ENCODE measurements at regions of chr3 and their contacts with region 1.

Region 1: GRCh38 chr3:101573449-101574387 is at the start of gene PCNP:
- DNase-seq: peak; percentile 99
- H3K4me3 ChIP-seq: peak within 1 kb of the TSS; percentile 70 to 97 (median 94)
- H3K27ac ChIP-seq: peak within 1 kb of the TSS; percentile 94 to 99 (median 98)
- H3K4me1 ChIP-seq: peaks cover 0 to 49% (median 36%) of the 10 kb centered on the region in 4 donors
- H3K27me3 ChIP-seq: no peaks in the 10 kb centered on the region
- CTCF ChIP-seq: peak; percentile 85 to 97 (median 91)
- EP300 ChIP-seq: peak in 1 of 4 donors; percentile 71
- POLR2A ChIP-seq: peak; percentile 81 to 84
- total RNA-seq, gene PCNP: 146 to 178 (median 163) TPM

Region 2: GRCh38 chr3:101478980-101479379 is 94.7 kb before region 1 on chr3:
- intact Hi-C with region 1: no loop called
- DNase-seq: no peak
- H3K4me3 ChIP-seq: no peak overlapping the region
- H3K27ac ChIP-seq: no peak overlapping the region
- H3K4me1 ChIP-seq: no peaks in the 10 kb centered on the region
- H3K27me3 ChIP-seq: no peaks in the 10 kb centered on the region
- CTCF ChIP-seq: no peak
- EP300 ChIP-seq: no peak
- POLR2A ChIP-seq: no peak

Region 3: GRCh38 chr3:101512646-101513418 is 60.9 kb before region 1 on chr3 and contains the start of gene SENP7:
- intact Hi-C with region 1: loop called (anchors 1 kb)
- DNase-seq: peak; percentile 92
- H3K4me3 ChIP-seq: peak within 1 kb of the TSS; percentile 76 to 88 (median 82)
- H3K27ac ChIP-seq: peak within 1 kb of the TSS; percentile 94 to 96 (median 95)
- H3K4me1 ChIP-seq: peaks cover 0 to 22% (median 14%) of the 10 kb centered on the region in 4 donors
- H3K27me3 ChIP-seq: peaks cover 0 to under 1% (median 0%) of the 10 kb centered on the region in 3 donors
- CTCF ChIP-seq: no peak
- EP300 ChIP-seq: peak in 1 of 4 donors; percentile 11
- POLR2A ChIP-seq: peak in 1 of 2 donors; percentile 13
- total RNA-seq, gene SENP7: 20.2 to 33.5 (median 30.4) TPM

Region 4: DNA sequence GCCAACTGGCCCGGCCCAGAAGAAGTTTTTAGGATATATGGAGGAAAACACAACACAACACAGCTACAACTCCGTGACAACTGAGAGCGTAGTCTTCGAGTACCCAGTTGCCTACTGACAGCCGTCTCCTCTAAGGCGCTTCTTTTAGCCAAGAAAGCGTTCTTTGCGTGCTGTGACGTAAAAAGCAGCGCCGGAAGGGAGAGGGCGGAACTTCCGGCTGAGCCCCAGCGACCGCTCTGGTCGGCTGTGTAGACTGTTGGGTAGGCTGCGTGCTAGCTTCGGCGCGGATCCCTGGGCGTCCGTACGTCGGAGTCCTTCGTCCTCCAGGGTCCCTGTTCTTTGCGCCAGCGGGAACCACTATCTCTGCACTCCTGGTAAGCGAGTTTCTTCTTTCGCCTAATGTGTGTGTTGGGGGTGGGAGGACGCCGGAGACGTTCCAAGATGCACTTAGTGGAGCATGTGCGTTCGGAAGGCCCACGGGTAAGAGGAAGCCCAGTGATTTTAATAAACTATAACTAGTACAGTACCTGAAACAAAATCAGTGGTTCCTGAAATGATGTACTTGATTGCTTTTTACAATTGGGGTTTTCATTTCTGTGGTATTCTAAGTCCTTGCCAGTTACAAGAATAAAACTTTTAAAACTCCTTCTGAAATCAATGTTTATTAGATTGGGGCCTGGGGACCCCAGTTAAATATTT is 11.9 kb before region 1 on chr3 and contains the start of gene TRMT10C:
- intact Hi-C with region 1: loop called (anchors 1 kb)
- DNase-seq: peak; percentile 95
- H3K4me3 ChIP-seq: peak within 1 kb of the TSS; percentile 47 to 74 (median 70)
- H3K27ac ChIP-seq: peak within 1 kb of the TSS; percentile 85 to 90 (median 87)
- H3K4me1 ChIP-seq: peaks cover 0 to 27% (median 16%) of the 10 kb centered on the region in 4 donors
- H3K27me3 ChIP-seq: peaks cover 0 to 27% (median 0%) of the 10 kb centered on the region in 3 donors
- CTCF ChIP-seq: no peak
- EP300 ChIP-seq: no peak
- POLR2A ChIP-seq: peak; percentile 77 to 84
- total RNA-seq, gene TRMT10C: 15.5 to 29.1 (median 19.2) TPM

Region 5: GRCh38 chr3:101676765-101677435 is 103.2 kb after region 1 on chr3 and contains the start of gene ZBTB11:
- intact Hi-C with region 1: loop called (anchors 5 kb)
- DNase-seq: peak; percentile 100
- H3K4me3 ChIP-seq: peak within 1 kb of the TSS; percentile 86 to 98 (median 93)
- H3K27ac ChIP-seq: peak within 1 kb of the TSS; percentile 96 to 99 (median 98)
- H3K4me1 ChIP-seq: peaks cover 0 to 30% (median 17%) of the 10 kb centered on the region in 4 donors
- H3K27me3 ChIP-seq: no peaks in the 10 kb centered on the region
- CTCF ChIP-seq: peak in 2 of 4 experiments; percentile 26 to 42
- EP300 ChIP-seq: peak in 2 of 4 donors; percentile 37 to 47
- POLR2A ChIP-seq: peak; percentile 90 to 91
- total RNA-seq, gene ZBTB11: 18.6 to 24.4 (median 21.5) TPM

Region 6: DNA sequence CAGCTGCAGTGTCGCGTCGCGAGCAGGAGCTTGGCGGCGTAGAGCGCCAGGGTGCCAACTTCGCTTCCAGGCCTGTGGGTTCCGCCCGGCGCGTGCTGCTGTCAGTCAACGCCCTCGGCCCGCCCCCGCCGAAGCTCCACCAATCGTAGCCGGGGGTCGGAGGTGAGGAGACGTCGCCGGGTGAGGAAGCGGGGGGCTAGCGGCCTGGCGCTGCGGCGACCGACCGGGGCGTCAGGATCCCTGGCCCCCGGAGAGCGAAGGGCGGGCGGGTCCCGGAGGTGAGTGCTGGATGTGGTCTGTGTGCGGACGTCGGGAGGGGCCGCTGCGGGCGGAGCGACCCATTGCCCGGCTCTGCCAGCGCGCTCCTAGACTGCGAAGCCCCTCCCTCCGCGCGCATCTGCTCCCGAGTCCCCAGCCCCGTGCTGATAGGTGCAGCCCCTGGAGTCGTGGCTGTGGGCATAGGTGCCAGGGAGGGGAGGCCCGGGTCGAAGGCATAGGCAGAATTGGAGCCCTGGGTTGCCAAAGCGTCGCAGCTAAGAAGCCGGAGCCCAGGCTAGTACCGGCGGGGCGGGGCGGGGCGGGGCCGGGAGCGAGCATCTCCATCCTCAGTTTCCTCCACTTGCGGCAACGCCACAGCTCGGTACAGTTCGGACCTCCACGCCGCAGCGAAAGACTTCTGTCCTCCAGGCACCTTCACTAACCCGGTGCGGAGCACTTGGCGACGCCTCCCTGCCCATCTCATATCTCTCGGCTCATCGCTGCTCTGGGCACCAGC is 205.5 kb after region 1 on chr3 and contains the start of gene NXPE3:
- intact Hi-C with region 1: loop called (anchors 5 kb)
- DNase-seq: peak; percentile 96
- H3K4me3 ChIP-seq: peak within 1 kb of the TSS; percentile 69 to 90 (median 87)
- H3K27ac ChIP-seq: peak within 1 kb of the TSS; percentile 85 to 93 (median 92)
- H3K4me1 ChIP-seq: peaks cover 0 to 34% (median 24%) of the 10 kb centered on the region in 4 donors
- H3K27me3 ChIP-seq: no peaks in the 10 kb centered on the region
- CTCF ChIP-seq: no peak
- EP300 ChIP-seq: no peak
- POLR2A ChIP-seq: no peak
- total RNA-seq, gene NXPE3: 11.5 to 15.8 (median 13.2) TPM